GM12878 (cell line): ENCODE measurements at regions of chr6 and their contacts with region 1.

Region 1: DNA sequence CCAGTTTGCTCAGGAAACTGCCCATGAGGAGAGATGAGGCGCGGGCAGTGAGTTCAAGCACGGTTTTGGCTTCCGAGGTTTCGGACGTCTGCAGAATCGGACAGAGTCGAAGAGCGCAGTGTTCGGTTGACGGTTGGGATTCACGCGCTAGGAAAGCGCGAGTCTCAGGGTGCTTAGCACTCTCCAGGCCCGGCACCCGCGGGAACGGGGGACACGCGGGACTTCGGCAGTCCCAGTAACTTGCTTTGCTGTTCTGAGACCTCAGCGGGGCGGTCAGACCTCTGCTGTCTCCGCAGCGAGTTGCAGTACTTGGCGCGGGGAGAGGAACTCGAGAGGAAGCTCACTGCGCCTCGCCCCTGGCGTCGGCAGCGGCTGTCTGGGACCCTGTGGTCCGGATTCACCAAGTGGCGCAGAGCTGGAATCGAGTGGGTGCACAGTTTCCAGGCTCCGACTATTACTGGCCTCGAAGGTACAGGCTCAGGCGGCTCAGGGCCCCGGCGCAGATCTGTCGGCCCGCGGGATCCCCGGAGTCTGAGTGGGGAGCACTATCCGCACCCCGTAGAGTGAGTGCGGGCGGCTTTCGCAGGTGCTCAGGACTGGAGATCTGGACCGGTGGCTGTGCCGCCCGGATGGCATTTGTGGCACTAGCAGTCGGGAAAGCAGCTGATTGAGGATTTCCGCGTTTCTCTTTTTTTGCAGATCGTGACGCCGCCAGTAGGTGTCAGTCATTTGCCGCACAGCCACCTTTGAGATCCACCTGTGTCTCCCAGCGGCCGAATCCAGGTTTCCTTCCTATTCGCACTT is at the start of gene POM121L2:
- DNase-seq: no peak
- ATAC-seq: peak; percentile 89
- H3K4me3 ChIP-seq: peak within 1 kb of the TSS; percentile 82
- H3K27ac ChIP-seq: no peak within 1 kb of the TSS
- H3K4me1 ChIP-seq: 0 out of 2 replicates have a peak, but pooled peaks cover 5% of the 10 kb centered on the region
- H3K27me3 ChIP-seq: no peaks in the 10 kb centered on the region; a peak in 2 of 4 replicates
- CTCF ChIP-seq: peak; percentile 74 to 85 (median 77)
- EP300 ChIP-seq: no peak
- POLR2A ChIP-seq: peak; percentile 45
- RAD21 ChIP-seq: peak; percentile 81
- polyA plus RNA-seq, gene POM121L2: not detected

Region 2: GRCh38 chr6:27479319-27480182 is 167.2 kb after region 1 on chr6:
- CTCF ChIA-PET with region 1: no interaction called
- POLR2A ChIA-PET with region 1: no interaction called
- RAD21 ChIA-PET with region 1: no interaction called
- SMC1A ChIA-PET with region 1: no interaction called
- in situ Hi-C with region 1: no loop called
- intact Hi-C with region 1: loop called (anchors 5 kb)
- DNase-seq: peak; percentile 97
- ATAC-seq: peak; percentile 86
- H3K4me3 ChIP-seq: peak overlapping the region; percentile 78
- H3K27ac ChIP-seq: peak overlapping the region; percentile 91
- H3K4me1 ChIP-seq: no peaks in the 10 kb centered on the region
- H3K27me3 ChIP-seq: no peaks in the 10 kb centered on the region
- CTCF ChIP-seq: no peak
- EP300 ChIP-seq: no peak; a peak in 1 of 4 replicates
- POLR2A ChIP-seq: peak; percentile 42
- RAD21 ChIP-seq: no peak

Region 3: DNA sequence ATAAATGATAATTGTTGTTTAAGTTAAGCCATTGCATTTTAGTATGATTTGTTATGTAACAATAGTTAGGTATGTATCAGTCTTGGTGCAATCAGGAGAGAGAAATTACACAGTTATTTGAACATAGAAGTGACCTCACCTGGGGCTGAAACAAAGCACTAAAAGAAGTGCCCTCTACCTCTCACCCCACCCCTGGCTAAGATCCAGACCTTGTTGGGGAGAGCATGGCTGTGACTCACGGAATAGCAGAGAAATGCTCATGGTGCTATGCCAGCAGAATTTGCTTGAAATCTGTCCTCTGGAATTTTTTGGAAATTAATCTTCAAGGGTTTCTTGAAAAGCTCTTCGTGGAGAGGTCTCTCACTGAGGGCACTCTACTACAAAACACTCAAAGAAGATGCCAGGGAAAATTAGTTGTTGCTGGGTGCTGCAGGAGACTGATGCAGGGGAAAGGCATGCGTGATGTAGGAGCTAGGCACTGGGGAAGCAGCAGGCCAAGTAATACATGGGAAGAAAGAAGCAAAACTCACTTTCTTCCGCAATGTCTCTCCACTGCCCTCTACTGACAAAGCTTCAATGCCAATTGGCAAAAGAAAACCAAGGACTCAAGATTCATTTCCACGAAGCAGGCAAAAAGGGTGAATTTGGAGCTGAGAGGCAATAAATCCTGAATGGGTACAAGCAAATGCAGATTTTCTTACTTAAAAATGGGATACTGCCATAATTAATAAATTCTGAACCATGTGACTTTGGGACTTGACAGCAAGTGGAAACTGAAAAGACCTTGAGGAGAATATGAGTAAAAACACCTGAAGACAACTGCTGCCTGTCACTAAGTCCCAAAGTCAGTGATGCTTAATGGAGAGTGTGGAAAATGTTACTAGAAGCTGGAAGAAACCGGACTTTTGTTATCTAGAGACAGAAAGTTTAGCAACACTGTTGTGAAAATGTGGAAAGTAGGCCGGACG is 296.9 kb after region 1 on chr6:
- CTCF ChIA-PET with region 1: interaction called, 13 read pairs
- POLR2A ChIA-PET with region 1: no interaction called
- RAD21 ChIA-PET with region 1: interaction called, 4 read pairs
- SMC1A ChIA-PET with region 1: interaction called, 6 read pairs
- in situ Hi-C with region 1: no loop called
- intact Hi-C with region 1: loop called (anchors 2 kb)
- DNase-seq: peak; percentile 56
- ATAC-seq: peak; percentile 65
- H3K4me3 ChIP-seq: no peak overlapping the region
- H3K27ac ChIP-seq: no peak overlapping the region
- H3K4me1 ChIP-seq: no peaks in the 10 kb centered on the region
- H3K27me3 ChIP-seq: no peaks in the 10 kb centered on the region
- CTCF ChIP-seq: peak; percentile 82 to 90 (median 90)
- EP300 ChIP-seq: no peak
- POLR2A ChIP-seq: no peak
- RAD21 ChIP-seq: peak; percentile 82

Region 4: DNA sequence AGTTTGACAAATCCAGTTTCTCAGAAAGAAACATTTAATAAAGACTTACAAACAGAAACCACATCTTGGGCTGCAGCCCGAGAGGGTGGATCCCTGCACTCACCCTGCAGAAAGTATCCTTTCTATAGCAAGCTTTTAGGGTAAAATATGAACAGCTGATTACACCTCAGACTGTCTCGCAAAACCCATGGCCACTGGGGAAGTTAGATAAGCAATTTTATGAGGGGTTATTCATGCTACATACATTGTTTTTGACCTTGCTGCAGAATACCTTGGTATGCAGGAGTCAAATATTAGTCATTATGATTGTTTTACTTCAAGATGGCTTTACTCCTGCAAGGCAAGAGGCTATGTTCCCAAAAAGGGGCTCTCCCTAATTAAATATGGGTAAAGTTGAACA is 472.9 kb after region 1 on chr6:
- CTCF ChIA-PET with region 1: interaction called, 3 read pairs
- POLR2A ChIA-PET with region 1: no interaction called
- RAD21 ChIA-PET with region 1: no interaction called
- SMC1A ChIA-PET with region 1: no interaction called
- in situ Hi-C with region 1: loop called (anchors 10 kb)
- intact Hi-C with region 1: no loop called
- DNase-seq: no peak
- ATAC-seq: no peak
- H3K4me3 ChIP-seq: no peak overlapping the region
- H3K27ac ChIP-seq: no peak overlapping the region
- H3K4me1 ChIP-seq: no peaks in the 10 kb centered on the region
- H3K27me3 ChIP-seq: no peaks in the 10 kb centered on the region
- CTCF ChIP-seq: no peak
- EP300 ChIP-seq: no peak
- POLR2A ChIP-seq: no peak
- RAD21 ChIP-seq: no peak